ENCODE measurements at regions of chr22 and their contacts with region 1.

Region 1: GRCh38 chr22:42649246-42650099 is at the start of gene CYB5R3:
- DNase-seq: peak; percentile 92
- H3K4me3 Mint-ChIP-seq: peak within 1 kb of the TSS; percentile 95
- H3K27ac Mint-ChIP-seq: peak within 1 kb of the TSS; percentile 97
- H3K4me1 Mint-ChIP-seq: peaks cover 11% of the 10 kb centered on the region
- H3K27me3 Mint-ChIP-seq: peaks cover 4% of the 10 kb centered on the region
- total RNA-seq, gene CYB5R3: 76.2 and 77.0 TPM in 2 replicates

Region 2: DNA sequence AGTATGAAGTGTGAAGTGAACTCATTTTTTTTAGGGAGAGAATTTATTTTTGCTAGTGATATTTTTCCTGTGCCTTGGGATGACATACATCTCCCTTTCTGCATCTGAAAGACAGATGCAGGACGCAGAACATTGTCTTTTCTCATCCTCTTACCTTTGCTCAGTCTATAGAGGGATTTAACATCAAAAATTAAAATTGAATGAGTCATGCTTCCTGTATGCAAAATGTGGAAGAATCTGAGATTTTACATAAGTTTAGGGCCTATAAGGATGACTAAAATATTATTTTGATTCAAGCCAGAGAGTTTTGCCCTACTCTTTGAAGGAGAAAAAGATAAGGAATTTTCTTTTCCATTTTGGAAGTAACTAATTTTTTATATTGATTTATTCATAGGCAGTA is 1001.0 kb before region 1 on chr22:
- intact Hi-C with region 1: no loop called
- DNase-seq: no peak
- H3K4me3 Mint-ChIP-seq: no peak overlapping the region
- H3K27ac Mint-ChIP-seq: no peak overlapping the region
- H3K4me1 Mint-ChIP-seq: peaks cover 5% of the 10 kb centered on the region
- H3K27me3 Mint-ChIP-seq: no peaks in the 10 kb centered on the region

Region 3: GRCh38 chr22:42844756-42845155 is 195.3 kb after region 1 on chr22:
- intact Hi-C with region 1: loop called (anchors 10 kb)
- DNase-seq: no peak
- H3K4me3 Mint-ChIP-seq: no peak overlapping the region
- H3K27ac Mint-ChIP-seq: no peak overlapping the region
- H3K4me1 Mint-ChIP-seq: peaks cover 19% of the 10 kb centered on the region
- H3K27me3 Mint-ChIP-seq: no peaks in the 10 kb centered on the region